ENCODE measurements at regions of chr11 and their contacts with region 1.

Region 1: GRCh38 chr11:117799634-117800033 is 2.6 kb upstream of the DSCAML1 start:
- DNase-seq: no peak
- H3K4me3 ChIP-seq: no peak overlapping the region
- H3K27ac ChIP-seq: no peak overlapping the region
- H3K4me1 ChIP-seq: peaks cover 19% of the 10 kb centered on the region
- H3K27me3 ChIP-seq: peaks cover 10% of the 10 kb centered on the region
- CTCF ChIP-seq: no peak
- POLR2A ChIP-seq: no peak

Region 2: DNA sequence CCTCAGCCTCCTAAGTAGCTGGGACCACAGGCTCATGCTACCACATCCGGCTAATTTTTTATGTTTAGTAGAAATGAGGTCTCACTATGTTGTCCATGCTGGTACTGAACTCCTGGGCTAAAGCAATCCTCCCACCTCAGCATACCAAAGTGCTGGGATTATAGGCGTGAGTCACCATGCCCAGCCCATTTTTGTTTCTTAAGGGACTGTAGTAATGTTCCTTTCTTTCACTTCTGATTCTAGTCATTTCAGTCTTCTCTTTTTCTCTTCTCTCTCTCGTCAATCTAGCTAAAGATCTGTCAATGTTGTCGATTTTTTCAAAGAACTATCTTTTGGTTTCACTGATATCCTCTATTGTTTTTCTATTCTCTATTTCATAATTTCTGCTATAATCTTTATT is 851.2 kb before region 1 on chr11:
- intact Hi-C with region 1: loop called (anchors 5 kb)
- DNase-seq: no peak
- H3K4me3 ChIP-seq: no peak overlapping the region
- H3K27ac ChIP-seq: no peak overlapping the region
- H3K4me1 ChIP-seq: no peaks in the 10 kb centered on the region
- H3K27me3 ChIP-seq: no peaks in the 10 kb centered on the region
- CTCF ChIP-seq: no peak
- POLR2A ChIP-seq: no peak